ENCODE measurements at regions of chr15 and their contacts with region 1.

Region 1: GRCh38 chr15:49832511-49832910 is 211.7 kb downstream of the DTWD1 start:
- DNase-seq: no peak
- ATAC-seq: 0 out of 2 replicates have a peak, but pooled peaks have one; percentile 21
- H3K4me3 ChIP-seq: no peak overlapping the region
- H3K27ac ChIP-seq: 0 out of 2 replicates have a peak overlapping the region, but pooled peaks have one; percentile 3
- H3K4me1 ChIP-seq: peaks cover 8% of the 10 kb centered on the region
- H3K27me3 ChIP-seq: no peaks in the 10 kb centered on the region
- CTCF ChIP-seq: peak; percentile 31
- POLR2A ChIP-seq: no peak
- RAD21 ChIP-seq: 0 out of 2 replicates have a peak, but pooled peaks have one; percentile 18

Region 2: GRCh38 chr15:49696433-49696832 is 136.1 kb before region 1 on chr15:
- CTCF ChIA-PET with region 1: no interaction called
- POLR2A ChIA-PET with region 1: no interaction called
- dilution Hi-C with region 1: no loop called
- in situ Hi-C with region 1: no loop called
- intact Hi-C with region 1: loop called (anchors 5 kb)
- DNase-seq: peak; percentile 80
- ATAC-seq: peak; percentile 71
- H3K4me3 ChIP-seq: no peak overlapping the region
- H3K27ac ChIP-seq: peak overlapping the region; percentile 82; the same call in 1 of the 2 replicates
- H3K4me1 ChIP-seq: peaks cover 5% of the 10 kb centered on the region
- H3K27me3 ChIP-seq: no peaks in the 10 kb centered on the region
- CTCF ChIP-seq: no peak
- POLR2A ChIP-seq: no peak
- RAD21 ChIP-seq: no peak

Region 3: GRCh38 chr15:49901996-49902684 is 69.6 kb after region 1 on chr15:
- CTCF ChIA-PET with region 1: no interaction called
- POLR2A ChIA-PET with region 1: no interaction called
- dilution Hi-C with region 1: no loop called
- in situ Hi-C with region 1: no loop called
- intact Hi-C with region 1: no loop called
- DNase-seq: peak; percentile 65
- ATAC-seq: peak; percentile 65
- H3K4me3 ChIP-seq: no peak overlapping the region
- H3K27ac ChIP-seq: peak overlapping the region; percentile 98
- H3K4me1 ChIP-seq: peaks cover 24% of the 10 kb centered on the region
- H3K27me3 ChIP-seq: no peaks in the 10 kb centered on the region
- CTCF ChIP-seq: peak; percentile 66
- POLR2A ChIP-seq: no peak
- RAD21 ChIP-seq: peak; percentile 65

Measured in IMR-90 (cell line).